BJ (cell line): ENCODE measurements at regions of chr2 and their contacts with region 1.

Region 1: GRCh38 chr2:45329045-45329677 is 281.9 kb downstream of the SRBD1 start:
- DNase-seq: no peak
- H3K4me3 ChIP-seq: no peak overlapping the region
- H3K27me3 ChIP-seq: peaks cover 2% of the 10 kb centered on the region; the same call in 1 of the 2 replicates
- CTCF ChIP-seq: 0 out of 2 replicates have a peak, but pooled peaks have one; percentile 6

Region 2: DNA sequence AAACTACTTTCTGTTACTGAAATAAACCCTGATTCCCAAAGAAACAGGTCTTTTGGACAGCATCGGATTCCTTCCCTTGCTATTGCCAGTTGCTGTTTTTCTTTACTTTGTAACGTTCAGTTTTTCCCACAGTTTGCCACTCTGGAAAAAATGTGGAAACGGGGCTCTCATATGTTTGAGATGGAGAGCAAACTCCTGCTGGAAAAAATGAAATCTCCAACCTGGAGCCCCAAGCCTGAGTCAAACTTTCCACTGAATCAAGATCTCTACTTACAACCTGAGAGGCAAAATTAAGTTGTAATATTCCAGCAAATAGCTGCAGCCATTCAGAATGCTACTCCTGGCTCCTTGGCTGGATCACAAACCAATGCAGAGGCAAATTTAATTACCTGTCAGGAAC is 11.2 kb after region 1 on chr2:
- CTCF ChIA-PET with region 1: interaction called, 12 read pairs
- POLR2A ChIA-PET with region 1: no interaction called
- DNase-seq: no peak
- H3K4me3 ChIP-seq: no peak overlapping the region
- H3K27me3 ChIP-seq: peaks cover 9% of the 10 kb centered on the region
- CTCF ChIP-seq: no peak